ENCODE measurements at regions of chr6 and their contacts with region 1.

Region 1: DNA sequence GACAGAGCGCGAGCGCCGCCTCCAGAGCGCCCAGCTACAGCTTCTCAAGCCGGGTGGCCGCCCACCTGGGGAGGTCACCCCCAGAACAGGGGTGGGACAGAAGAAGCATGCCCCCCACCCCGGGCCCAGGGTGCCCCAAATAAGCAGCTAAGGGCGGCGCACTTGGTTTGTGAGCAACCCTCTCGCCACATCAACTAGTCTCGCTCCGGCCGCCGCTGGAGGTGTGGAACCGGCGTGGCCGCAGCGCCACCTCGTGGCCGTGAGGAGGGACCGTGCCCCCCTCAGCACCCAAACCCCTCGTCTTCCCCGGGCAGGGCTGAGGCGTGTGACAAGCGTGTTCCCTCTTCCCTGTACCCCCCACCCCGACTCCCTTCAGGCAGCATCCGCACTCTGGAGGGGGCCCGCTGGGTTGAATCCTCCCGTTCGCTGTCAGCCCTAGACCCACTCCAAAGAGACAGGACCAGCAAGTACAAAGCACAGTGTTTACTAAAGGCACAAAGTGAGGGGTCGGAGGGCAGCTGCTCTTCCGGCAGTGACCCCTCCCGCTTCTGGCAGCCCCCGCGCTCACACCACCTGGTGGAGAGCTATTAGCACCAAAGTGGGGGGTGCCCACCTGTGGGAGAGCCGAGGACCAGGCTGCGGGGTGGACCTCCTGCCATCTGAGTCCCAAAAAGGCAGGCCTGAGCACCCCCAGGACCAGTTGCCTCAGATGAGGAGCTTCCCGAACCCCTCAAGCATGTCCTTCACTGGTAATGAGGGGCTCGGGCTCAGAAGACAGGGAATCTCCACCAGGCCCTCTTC is 45.4 kb downstream of the MDFI start:
- DNase-seq: no peak
- H3K4me3 ChIP-seq: peak overlapping the region; percentile 38
- CTCF ChIP-seq: peak; percentile 97

Region 2: DNA sequence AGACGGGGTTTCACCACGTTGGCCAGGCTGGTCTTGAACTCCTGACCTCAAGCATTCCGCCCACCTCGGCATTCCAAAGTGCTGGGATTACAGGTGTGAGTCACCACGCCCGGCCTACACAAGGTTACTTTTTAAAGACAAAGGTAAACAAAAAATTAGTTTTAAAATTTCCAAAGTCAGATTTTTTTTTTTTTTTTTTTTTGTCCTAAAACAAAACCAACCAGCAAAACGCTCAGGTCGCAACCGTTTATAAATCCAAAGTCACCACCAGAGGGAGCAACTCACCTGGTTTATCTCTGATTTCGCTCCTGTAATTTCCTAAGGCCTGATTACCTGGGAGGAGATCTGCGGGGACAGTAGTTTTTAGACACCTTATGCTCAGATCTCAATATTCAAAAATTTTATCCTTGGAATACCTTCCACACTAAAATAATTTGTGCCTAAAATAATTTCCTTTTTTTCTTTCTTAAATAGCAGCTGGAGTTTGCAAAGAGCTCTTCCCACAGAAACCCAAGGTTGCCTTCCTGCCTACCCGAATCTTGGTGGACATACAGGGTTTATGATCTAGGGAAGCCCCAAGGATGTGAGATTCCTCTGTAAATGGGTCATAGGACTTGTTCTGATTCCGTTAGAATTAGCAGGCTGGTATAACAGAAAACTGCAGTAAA is 377.4 kb before region 1 on chr6:
- CTCF ChIA-PET with region 1: interaction called, 18 read pairs
- POLR2A ChIA-PET with region 1: no interaction called
- DNase-seq: no peak
- H3K4me3 ChIP-seq: no peak overlapping the region
- CTCF ChIP-seq: peak; percentile 42

Region 3: GRCh38 chr6:41442800-41443501 is 240.8 kb before region 1 on chr6:
- CTCF ChIA-PET with region 1: interaction called, 10 read pairs
- POLR2A ChIA-PET with region 1: no interaction called
- DNase-seq: no peak
- H3K4me3 ChIP-seq: no peak overlapping the region
- CTCF ChIP-seq: peak; percentile 64

Region 4: GRCh38 chr6:41571021-41571780 is 112.5 kb before region 1 on chr6:
- CTCF ChIA-PET with region 1: no interaction called
- POLR2A ChIA-PET with region 1: no interaction called
- DNase-seq: no peak
- H3K4me3 ChIP-seq: no peak overlapping the region
- CTCF ChIP-seq: no peak

Region 5: GRCh38 chr6:41602864-41603608 is 80.7 kb before region 1 on chr6:
- CTCF ChIA-PET with region 1: interaction called, 179 read pairs
- POLR2A ChIA-PET with region 1: interaction called, 4 read pairs
- DNase-seq: no peak
- H3K4me3 ChIP-seq: no peak overlapping the region; the same call in 1 of the 2 replicates
- CTCF ChIP-seq: peak; percentile 95

Region 6: GRCh38 chr6:41705996-41706835 is 22.5 kb after region 1 on chr6:
- CTCF ChIA-PET with region 1: interaction called, 37 read pairs
- POLR2A ChIA-PET with region 1: interaction called, 4 read pairs
- DNase-seq: no peak
- H3K4me3 ChIP-seq: no peak overlapping the region
- CTCF ChIP-seq: peak; percentile 76

Region 7: GRCh38 chr6:41767156-41767833 is 83.6 kb after region 1 on chr6:
- CTCF ChIA-PET with region 1: interaction called, 13 read pairs
- POLR2A ChIA-PET with region 1: no interaction called
- DNase-seq: peak; percentile 24
- H3K4me3 ChIP-seq: no peak overlapping the region
- CTCF ChIP-seq: no peak

Region 8: GRCh38 chr6:42043787-42044475 is 360.2 kb after region 1 on chr6:
- CTCF ChIA-PET with region 1: interaction called, 15 read pairs
- POLR2A ChIA-PET with region 1: no interaction called
- DNase-seq: no peak
- H3K4me3 ChIP-seq: no peak overlapping the region; the same call in 1 of the 2 replicates
- CTCF ChIP-seq: peak; percentile 94

Measured in AG04449 (cell line).